PC-9 (cell line): ENCODE measurements at regions of chr20 and their contacts with region 1.

Region 1: DNA sequence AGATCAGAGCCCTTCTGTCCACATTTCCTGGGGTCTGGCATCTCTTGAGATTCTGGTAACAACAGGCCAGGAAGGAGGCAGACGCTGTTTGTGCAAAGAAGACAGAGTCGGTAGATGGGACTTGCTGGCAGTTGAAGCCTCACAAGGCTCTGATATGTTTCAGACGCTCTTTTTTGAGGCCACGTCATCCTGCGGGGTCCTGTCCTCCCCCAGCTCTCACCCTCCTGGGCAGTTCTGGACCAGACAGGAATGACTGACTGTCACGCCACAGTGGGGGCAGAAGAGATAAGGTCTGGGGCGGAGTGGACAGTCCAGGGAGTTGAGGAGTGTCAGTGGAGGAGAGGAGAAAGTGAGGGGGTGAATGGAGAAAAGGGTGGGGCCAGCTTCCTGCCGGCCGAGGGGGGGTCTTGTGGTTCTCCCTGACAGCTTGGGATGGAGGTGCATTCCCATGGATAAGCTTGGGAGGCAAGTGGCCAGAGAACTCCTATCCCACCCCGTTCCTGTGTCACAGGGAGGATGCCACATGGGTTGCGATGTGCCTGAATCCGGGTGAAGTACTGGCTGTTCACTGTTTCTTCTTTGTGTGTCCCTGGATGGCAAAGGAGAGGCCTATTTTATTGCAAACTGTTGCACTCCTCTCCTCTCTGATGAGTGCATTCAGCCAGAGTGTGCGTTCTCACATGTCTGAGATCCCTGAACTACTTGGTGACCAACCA is 87.2 kb upstream of the SULF2 start:
- DNase-seq: no peak
- H3K4me3 ChIP-seq: no peak overlapping the region
- H3K27ac ChIP-seq: no peak overlapping the region
- H3K4me1 ChIP-seq: peaks cover 30% of the 10 kb centered on the region
- H3K27me3 ChIP-seq: no peaks in the 10 kb centered on the region
- CTCF ChIP-seq: no peak

Region 2: GRCh38 chr20:47929363-47930123 is 57.0 kb after region 1 on chr20:
- CTCF ChIA-PET with region 1: no interaction called
- POLR2A ChIA-PET with region 1: interaction called, 12 read pairs
- intact Hi-C with region 1: no loop called
- DNase-seq: peak; percentile 50 to 88
- H3K4me3 ChIP-seq: no peak overlapping the region
- H3K27ac ChIP-seq: peak overlapping the region; percentile 96
- H3K4me1 ChIP-seq: peaks cover 68% of the 10 kb centered on the region
- H3K27me3 ChIP-seq: no peaks in the 10 kb centered on the region
- CTCF ChIP-seq: no peak

Region 3: DNA sequence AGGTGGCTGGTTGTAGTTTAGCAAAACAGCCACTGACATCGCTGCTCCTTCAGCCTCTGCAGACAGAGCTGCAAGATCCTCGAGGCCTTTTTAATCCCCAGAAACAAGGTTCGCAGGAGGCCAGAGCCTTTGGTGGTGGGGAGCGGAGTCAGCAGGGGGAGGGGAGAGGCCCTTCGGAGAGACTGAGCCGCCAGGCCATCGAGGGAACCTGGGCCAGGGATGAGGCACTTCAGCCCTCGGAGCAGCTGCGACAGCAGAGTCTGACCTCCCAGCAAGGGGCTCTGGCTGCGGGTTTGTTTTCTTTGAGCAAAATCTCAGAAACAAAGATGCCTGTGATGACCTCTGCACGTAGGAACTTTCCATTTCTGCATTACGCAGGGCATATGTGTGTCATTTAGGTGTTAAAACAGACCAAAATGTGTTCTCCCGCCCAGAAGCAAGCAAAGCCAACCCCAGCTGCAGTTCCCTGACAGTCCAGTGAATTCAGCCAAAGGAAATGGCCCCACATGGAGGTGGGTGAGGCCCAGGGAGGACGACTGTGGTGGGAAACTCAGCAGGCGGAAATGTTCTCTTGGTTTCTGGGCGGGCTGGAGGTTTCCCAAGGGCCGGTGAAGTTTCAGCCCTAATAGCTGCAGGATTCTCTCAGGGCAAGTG is 84.0 kb after region 1 on chr20:
- CTCF ChIA-PET with region 1: no interaction called
- POLR2A ChIA-PET with region 1: no interaction called
- intact Hi-C with region 1: no loop called
- DNase-seq: no peak
- H3K4me3 ChIP-seq: no peak overlapping the region
- H3K27ac ChIP-seq: no peak overlapping the region
- H3K4me1 ChIP-seq: peaks cover 29% of the 10 kb centered on the region
- H3K27me3 ChIP-seq: no peaks in the 10 kb centered on the region
- CTCF ChIP-seq: no peak